Naive thymus-derived CD4-positive, alpha-beta T cell (primary cell): ENCODE measurements at regions of chr15 and their contacts with region 1.

Region 1: DNA sequence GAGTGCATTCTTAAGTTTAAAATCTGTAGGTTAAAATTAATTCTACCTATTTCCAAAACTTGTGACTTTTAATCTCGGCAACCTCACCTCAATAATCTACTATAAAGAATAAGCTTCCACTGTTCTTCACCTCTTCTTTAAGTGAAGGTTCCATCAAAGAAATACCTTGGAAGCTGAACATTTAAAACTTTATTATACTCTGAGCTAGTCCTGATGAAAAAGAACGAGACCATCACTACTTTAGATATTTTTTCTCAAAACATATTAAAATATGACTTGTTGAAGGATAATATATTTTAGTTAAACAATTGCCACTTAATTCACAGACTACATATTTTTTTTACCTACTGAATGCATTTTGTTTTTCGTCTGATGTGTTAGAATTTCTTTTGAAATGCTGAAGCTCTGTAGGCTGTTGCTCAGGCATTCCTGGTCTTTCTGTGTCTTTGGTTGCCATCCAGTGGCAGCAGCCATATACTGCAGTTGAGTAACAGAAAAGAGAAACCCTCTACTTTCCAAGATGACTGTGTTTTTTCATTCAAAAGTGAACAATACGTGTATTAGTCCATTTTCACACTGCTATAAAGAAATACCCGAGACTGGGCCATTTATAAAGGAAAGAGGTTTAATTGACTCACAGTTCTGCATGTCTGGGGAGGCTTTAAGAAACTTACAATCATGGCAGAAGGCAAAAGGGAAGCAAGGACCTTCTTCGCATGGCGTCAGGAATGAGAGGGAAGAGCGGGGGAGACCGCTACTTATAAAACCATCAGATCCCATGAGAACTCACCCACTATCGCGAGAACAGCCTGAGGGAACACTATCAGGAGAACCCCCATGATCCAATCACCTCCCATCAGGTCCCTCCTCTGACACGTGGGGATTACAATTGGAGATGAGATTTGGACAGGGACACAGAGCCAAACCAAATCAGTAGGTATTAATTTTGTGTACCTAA is 4.5 kb upstream of the GOLGA8B start:
- DNase-seq: peak in 8 of 9 donors; percentile 39 to 74 (median 62)
- ATAC-seq: peak; percentile 72
- H3K4me3 ChIP-seq: no peak overlapping the region
- H3K4me3 Mint-ChIP-seq: peak overlapping the region; percentile 0 to 83 (median 76)
- H3K27ac ChIP-seq: no peak overlapping the region
- H3K27ac Mint-ChIP-seq: peak overlapping the region in 4 of 9 donors; percentile 3 to 83 (median 40)
- H3K4me1 ChIP-seq: peaks cover 0 to 4% of the 10 kb centered on the region in 2 donors
- H3K4me1 Mint-ChIP-seq: peaks cover 5 to 13% (median 6%) of the 10 kb centered on the region in 7 donors
- H3K27me3 ChIP-seq: no peaks in the 10 kb centered on the region
- H3K27me3 Mint-ChIP-seq: peaks cover 3 to 32% (median 11%) of the 10 kb centered on the region in 5 donors

Region 2: GRCh38 chr15:34038023-34038870 is 549.7 kb before region 1 on chr15:
- CTCF ChIA-PET with region 1: no interaction called
- POLR2A ChIA-PET with region 1: interaction called, 3 read pairs
- intact Hi-C with region 1: loop called in 1 of 2 experiments (anchors 1 kb)
- DNase-seq: peak; percentile 52 to 76 (median 72)
- ATAC-seq: peak; percentile 90
- H3K4me3 ChIP-seq: peak overlapping the region; percentile 100
- H3K4me3 Mint-ChIP-seq: peak overlapping the region; percentile 80 to 97 (median 94)
- H3K27ac ChIP-seq: peak overlapping the region; percentile 80
- H3K27ac Mint-ChIP-seq: peak overlapping the region; percentile 87 to 96 (median 94)
- H3K4me1 ChIP-seq: peaks cover 8 to 14% of the 10 kb centered on the region in 2 donors
- H3K4me1 Mint-ChIP-seq: peaks cover 12 to 25% (median 23%) of the 10 kb centered on the region in 7 donors
- H3K27me3 ChIP-seq: no peaks in the 10 kb centered on the region
- H3K27me3 Mint-ChIP-seq: no peaks in the 10 kb centered on the region

Region 3: DNA sequence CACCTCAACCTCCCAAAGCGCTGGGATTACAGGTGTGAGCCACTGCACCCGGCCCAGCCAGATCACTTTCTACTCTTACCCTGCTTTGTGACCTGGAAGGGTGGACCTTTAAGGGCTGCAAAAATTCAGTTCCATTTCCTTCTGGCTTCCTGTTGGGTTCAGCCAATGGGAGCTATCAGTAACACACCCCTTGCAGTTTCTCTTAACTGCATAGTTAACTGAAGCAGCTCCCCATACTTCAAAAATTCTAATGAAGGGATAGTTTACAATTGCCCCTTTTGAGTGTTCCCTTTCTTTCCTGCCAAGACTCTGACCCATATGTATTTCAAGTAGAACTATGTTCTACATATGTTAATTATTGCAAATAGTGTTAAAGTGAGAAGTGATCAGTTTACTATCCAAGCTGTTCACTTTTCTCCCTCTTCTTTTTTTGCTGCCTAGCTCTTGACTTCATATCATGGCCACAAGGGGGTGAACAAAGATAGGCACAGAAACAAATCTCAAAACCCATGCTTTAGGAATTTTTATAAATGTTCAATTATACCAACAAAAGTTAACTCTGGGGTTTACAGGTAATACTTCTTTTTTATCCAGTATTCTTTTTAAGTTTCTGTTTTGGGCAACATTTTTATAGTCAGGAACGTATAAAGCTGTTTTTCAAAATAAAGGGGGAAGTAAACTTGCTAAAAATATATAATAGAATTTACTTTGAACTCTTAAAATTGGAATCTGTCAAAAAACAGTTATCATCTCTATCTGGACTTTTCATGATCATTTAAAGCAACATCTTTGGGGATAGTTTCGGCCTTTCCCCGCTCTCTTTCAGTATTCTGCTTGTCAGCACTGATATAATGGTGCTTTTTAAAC is 478.0 kb before region 1 on chr15:
- CTCF ChIA-PET with region 1: interaction called, 6 read pairs
- POLR2A ChIA-PET with region 1: no interaction called
- intact Hi-C with region 1: loop called (anchors 1 kb)
- DNase-seq: peak in 3 of 9 donors; percentile 11 to 17 (median 17)
- ATAC-seq: no peak
- H3K4me3 ChIP-seq: no peak overlapping the region
- H3K4me3 Mint-ChIP-seq: no peak overlapping the region
- H3K27ac ChIP-seq: no peak overlapping the region
- H3K27ac Mint-ChIP-seq: no peak overlapping the region
- H3K4me1 ChIP-seq: no peaks in the 10 kb centered on the region
- H3K4me1 Mint-ChIP-seq: peaks cover 0 to 6% (median 0%) of the 10 kb centered on the region in 7 donors
- H3K27me3 ChIP-seq: no peaks in the 10 kb centered on the region
- H3K27me3 Mint-ChIP-seq: peaks cover 0 to 17% (median 5%) of the 10 kb centered on the region in 5 donors

Region 4: DNA sequence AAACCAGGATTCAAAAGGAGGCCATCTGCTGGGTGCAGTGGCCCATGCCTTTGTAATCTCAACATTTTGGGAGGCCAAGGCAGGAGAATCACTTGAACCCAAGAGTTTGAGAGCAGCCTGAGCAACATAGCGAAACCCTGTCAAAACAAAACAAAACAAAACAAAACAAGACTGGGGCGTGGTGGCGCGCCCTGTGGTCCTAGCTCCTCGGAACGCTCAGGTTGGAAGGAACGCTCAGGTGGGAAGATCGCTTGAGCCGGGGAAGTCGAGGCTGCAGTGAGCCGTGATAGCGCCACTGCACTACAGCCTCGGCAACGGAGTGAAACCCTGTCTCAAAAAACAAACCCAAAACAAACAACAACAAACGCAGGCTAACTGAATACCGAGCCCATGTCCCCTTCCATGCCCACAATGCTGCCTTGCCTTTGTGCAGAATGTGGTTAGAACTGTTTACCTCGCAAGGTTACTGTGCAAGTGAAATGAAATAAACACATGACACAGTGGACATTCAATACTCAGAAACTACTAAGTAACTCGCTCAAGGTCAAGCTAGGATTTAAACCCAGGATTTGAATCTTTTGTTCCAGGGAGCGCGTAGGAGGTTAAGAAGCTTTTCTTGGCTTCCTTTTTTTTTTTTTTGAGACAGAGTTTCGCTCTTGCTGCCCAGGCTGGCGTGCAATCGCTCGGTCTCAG is 363.9 kb before region 1 on chr15:
- CTCF ChIA-PET with region 1: interaction called, 5 read pairs
- POLR2A ChIA-PET with region 1: interaction called, 3 read pairs
- intact Hi-C with region 1: loop called in 1 of 2 experiments (anchors 1 kb)
- DNase-seq: no peak
- ATAC-seq: no peak
- H3K4me3 ChIP-seq: peak overlapping the region; percentile 82
- H3K4me3 Mint-ChIP-seq: peak overlapping the region; percentile 88 to 100 (median 94)
- H3K27ac ChIP-seq: peak overlapping the region; percentile 83
- H3K27ac Mint-ChIP-seq: peak overlapping the region; percentile 93 to 100 (median 99)
- H3K4me1 ChIP-seq: peaks cover 5 to 13% of the 10 kb centered on the region in 2 donors
- H3K4me1 Mint-ChIP-seq: peaks cover 9 to 35% (median 30%) of the 10 kb centered on the region in 7 donors
- H3K27me3 ChIP-seq: no peaks in the 10 kb centered on the region
- H3K27me3 Mint-ChIP-seq: peaks cover 0 to 5% (median 0%) of the 10 kb centered on the region in 5 donors

Region 5: GRCh38 chr15:34337557-34338306 is 250.3 kb before region 1 on chr15 and contains the start of gene SLC12A6:
- CTCF ChIA-PET with region 1: interaction called, 5 read pairs
- POLR2A ChIA-PET with region 1: interaction called, 3 read pairs
- intact Hi-C with region 1: loop called (anchors 1 to 10 kb)
- DNase-seq: peak; percentile 90 to 93 (median 92)
- ATAC-seq: peak; percentile 94
- H3K4me3 ChIP-seq: peak within 1 kb of the TSS; percentile 96
- H3K4me3 Mint-ChIP-seq: peak within 1 kb of the TSS; percentile 90 to 100 (median 98)
- H3K27ac ChIP-seq: peak within 1 kb of the TSS; percentile 92
- H3K27ac Mint-ChIP-seq: peak within 1 kb of the TSS; percentile 82 to 99 (median 98)
- H3K4me1 ChIP-seq: peaks cover 30 to 41% of the 10 kb centered on the region in 2 donors
- H3K4me1 Mint-ChIP-seq: peaks cover 35 to 72% (median 60%) of the 10 kb centered on the region in 7 donors
- H3K27me3 ChIP-seq: no peaks in the 10 kb centered on the region
- H3K27me3 Mint-ChIP-seq: no peaks in the 10 kb centered on the region
- total RNA-seq, gene SLC12A6: 39.2 to 122 (median 111) TPM

Region 6: GRCh38 chr15:34437687-34438086 is 150.3 kb before region 1 on chr15 and contains the start of gene GOLGA8A:
- CTCF ChIA-PET with region 1: interaction called, 4 read pairs
- POLR2A ChIA-PET with region 1: no interaction called
- intact Hi-C with region 1: loop called in 1 of 2 experiments (anchors 1 kb)
- DNase-seq: peak in 8 of 9 donors; percentile 62 to 88 (median 82)
- ATAC-seq: peak; percentile 88
- H3K4me3 ChIP-seq: peak within 1 kb of the TSS; percentile 51
- H3K4me3 Mint-ChIP-seq: peak within 1 kb of the TSS in 9 of 10 donors; percentile 81 to 98 (median 95)
- H3K27ac ChIP-seq: peak within 1 kb of the TSS; percentile 60
- H3K27ac Mint-ChIP-seq: peak within 1 kb of the TSS in 8 of 9 donors; percentile 78 to 96 (median 94)
- H3K4me1 ChIP-seq: peaks cover 6 to 12% of the 10 kb centered on the region in 2 donors
- H3K4me1 Mint-ChIP-seq: peaks cover 3 to 32% (median 21%) of the 10 kb centered on the region in 7 donors
- H3K27me3 ChIP-seq: no peaks in the 10 kb centered on the region
- H3K27me3 Mint-ChIP-seq: peaks cover 0 to 16% (median under 1%) of the 10 kb centered on the region in 5 donors
- total RNA-seq, gene GOLGA8A: 147 to 361 (median 158) TPM

Region 7: GRCh38 chr15:34799149-34800101 is 211.4 kb after region 1 on chr15:
- CTCF ChIA-PET with region 1: no interaction called
- POLR2A ChIA-PET with region 1: no interaction called
- intact Hi-C with region 1: no loop called
- DNase-seq: no peak
- ATAC-seq: no peak
- H3K4me3 ChIP-seq: no peak overlapping the region
- H3K4me3 Mint-ChIP-seq: no peak overlapping the region
- H3K27ac ChIP-seq: no peak overlapping the region
- H3K27ac Mint-ChIP-seq: no peak overlapping the region
- H3K4me1 ChIP-seq: no peaks in the 10 kb centered on the region
- H3K4me1 Mint-ChIP-seq: peaks cover 0 to 2% (median under 1%) of the 10 kb centered on the region in 7 donors
- H3K27me3 ChIP-seq: no peaks in the 10 kb centered on the region
- H3K27me3 Mint-ChIP-seq: peaks cover 38 to 67% (median 43%) of the 10 kb centered on the region in 5 donors

Region 8: DNA sequence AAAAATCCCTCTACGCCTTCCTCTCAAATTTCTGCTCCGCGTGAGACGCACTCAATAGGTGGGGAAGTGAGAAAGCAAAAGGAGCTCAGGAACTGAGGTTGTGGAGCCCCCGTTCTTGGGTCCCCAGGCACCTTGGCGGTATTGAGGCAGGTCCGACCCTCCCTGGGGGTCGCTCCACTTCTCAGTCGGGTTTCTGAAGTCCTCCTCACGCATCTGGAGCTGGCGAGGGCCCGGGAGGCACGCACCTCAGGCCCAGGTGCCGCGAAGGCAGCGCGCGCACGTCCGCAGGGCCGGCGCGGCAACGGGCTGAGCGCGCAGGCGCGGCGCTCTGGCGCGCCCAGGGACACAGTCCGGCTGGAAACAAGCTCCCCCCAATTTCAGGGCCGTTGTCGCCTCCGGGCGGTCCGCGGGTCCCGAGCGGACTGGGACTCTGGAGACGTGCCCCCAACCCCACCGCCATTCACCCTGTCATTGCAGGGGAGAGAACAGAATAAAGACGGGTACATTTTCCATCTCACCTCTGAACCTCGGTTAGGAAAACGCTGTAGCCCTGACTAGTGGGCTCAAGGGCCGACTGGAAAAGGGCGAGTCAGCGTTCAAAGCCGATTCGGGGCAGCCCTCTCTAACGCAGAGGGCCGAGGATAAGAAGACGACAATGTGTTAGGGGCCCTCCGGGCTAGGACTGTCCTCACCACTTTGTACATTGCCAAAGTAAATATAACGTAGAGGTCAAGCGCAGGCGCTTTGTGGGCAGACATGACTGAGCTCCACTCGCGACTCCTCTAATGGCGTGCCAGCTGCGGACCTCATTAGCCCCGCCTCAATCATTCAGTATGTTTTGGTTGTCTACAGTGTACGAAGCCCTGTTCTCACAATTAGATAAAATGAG is 400.2 kb after region 1 on chr15 and contains the start of gene ZNF770:
- CTCF ChIA-PET with region 1: no interaction called
- POLR2A ChIA-PET with region 1: no interaction called
- intact Hi-C with region 1: loop called in 1 of 2 experiments (anchors 5 kb)
- DNase-seq: peak; percentile 67 to 91 (median 85)
- ATAC-seq: peak; percentile 95
- H3K4me3 ChIP-seq: peak within 1 kb of the TSS; percentile 99
- H3K4me3 Mint-ChIP-seq: peak within 1 kb of the TSS; percentile 93 to 100 (median 98)
- H3K27ac ChIP-seq: peak within 1 kb of the TSS; percentile 97
- H3K27ac Mint-ChIP-seq: peak within 1 kb of the TSS; percentile 96 to 100 (median 99)
- H3K4me1 ChIP-seq: peaks cover 22 to 25% of the 10 kb centered on the region in 2 donors
- H3K4me1 Mint-ChIP-seq: peaks cover 20 to 55% (median 45%) of the 10 kb centered on the region in 7 donors
- H3K27me3 ChIP-seq: no peaks in the 10 kb centered on the region
- H3K27me3 Mint-ChIP-seq: no peaks in the 10 kb centered on the region
- total RNA-seq, gene ZNF770: 32.5 to 69.9 (median 50.2) TPM

Region 9: DNA sequence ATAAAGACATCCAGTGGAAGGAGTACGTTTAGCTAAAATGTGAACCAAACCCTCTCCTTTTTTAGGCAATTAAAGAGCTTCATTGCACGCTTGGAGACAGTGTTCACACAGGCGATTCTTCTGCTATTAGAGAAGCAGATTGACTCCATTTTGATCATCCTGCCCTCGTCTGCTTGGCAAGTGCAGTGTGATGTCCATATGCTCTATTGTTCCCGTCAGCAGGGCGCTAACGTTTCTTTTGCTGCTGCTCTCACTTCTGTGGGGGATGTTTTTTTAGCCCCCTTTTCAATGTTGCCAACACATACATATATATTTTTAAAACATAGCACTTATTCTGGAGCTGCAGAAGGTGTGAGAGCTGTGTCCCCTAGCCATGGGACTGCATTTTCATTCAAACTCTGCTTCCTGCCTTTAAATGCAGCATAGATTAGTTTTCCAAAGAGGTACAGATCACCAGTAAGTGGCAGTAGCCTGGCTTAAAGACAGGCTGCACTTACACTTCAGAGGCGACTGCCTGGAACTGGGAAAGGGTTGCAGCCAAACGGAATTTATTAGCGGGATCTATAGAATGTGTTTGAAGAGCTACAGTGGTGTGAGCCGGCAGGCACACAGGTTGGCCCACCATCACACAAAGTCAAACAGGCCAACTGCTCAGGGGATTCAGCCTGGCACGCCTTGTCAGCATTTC is 1250.6 kb after region 1 on chr15:
- CTCF ChIA-PET with region 1: no interaction called
- POLR2A ChIA-PET with region 1: no interaction called
- intact Hi-C with region 1: no loop called
- DNase-seq: no peak
- ATAC-seq: no peak
- H3K4me3 ChIP-seq: no peak overlapping the region
- H3K4me3 Mint-ChIP-seq: no peak overlapping the region
- H3K27ac ChIP-seq: no peak overlapping the region
- H3K27ac Mint-ChIP-seq: no peak overlapping the region
- H3K4me1 ChIP-seq: no peaks in the 10 kb centered on the region
- H3K4me1 Mint-ChIP-seq: no peaks in the 10 kb centered on the region
- H3K27me3 ChIP-seq: no peaks in the 10 kb centered on the region
- H3K27me3 Mint-ChIP-seq: peaks cover 0 to 24% (median 2%) of the 10 kb centered on the region in 5 donors